ENCODE measurements at regions of chr13 and their contacts with region 1.

Region 1: DNA sequence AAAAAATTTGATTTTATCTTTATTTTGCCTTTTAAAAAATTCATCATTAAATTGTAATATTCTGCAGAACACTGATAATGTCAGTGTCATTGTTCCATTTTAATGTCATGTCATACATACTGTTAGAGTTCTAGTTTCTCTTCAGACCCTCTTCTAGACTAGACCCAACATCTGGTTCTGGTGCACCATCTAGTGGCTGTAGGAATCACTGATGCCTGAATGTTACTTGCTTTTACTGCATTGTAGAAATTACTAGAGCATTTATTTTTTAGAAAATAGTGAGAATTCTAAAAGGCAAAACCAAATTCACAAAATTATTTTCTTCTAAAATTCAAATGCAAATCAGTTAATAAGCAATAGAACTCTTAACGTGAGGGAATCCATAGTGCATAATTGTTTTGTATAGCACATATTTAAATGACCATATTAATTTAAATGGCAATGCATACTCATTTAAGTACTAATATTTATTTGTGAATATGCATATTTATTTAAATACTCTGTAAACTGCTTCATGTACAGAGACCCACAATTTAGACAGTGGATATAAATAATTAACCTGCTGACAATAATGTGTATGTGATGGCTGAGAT is 425.7 kb downstream of the KLF12 start:
- DNase-seq: peak; percentile 66
- ATAC-seq: peak; percentile 82
- H3K4me3 Mint-ChIP-seq: no peak overlapping the region
- H3K27ac Mint-ChIP-seq: no peak overlapping the region
- H3K4me1 Mint-ChIP-seq: peaks cover 10% of the 10 kb centered on the region
- H3K27me3 Mint-ChIP-seq: no peaks in the 10 kb centered on the region
- CTCF ChIP-seq: peak; percentile 84

Region 2: GRCh38 chr13:73058736-73059459 is 649.6 kb before region 1 on chr13 and contains the start of gene KLF5:
- CTCF ChIA-PET with region 1: interaction called, 10 read pairs
- POLR2A ChIA-PET with region 1: no interaction called
- intact Hi-C with region 1: no loop called
- DNase-seq: peak; percentile 96
- ATAC-seq: peak; percentile 99
- H3K4me3 Mint-ChIP-seq: peak within 1 kb of the TSS; percentile 72
- H3K27ac Mint-ChIP-seq: no peak within 1 kb of the TSS
- H3K4me1 Mint-ChIP-seq: peaks cover 15% of the 10 kb centered on the region
- H3K27me3 Mint-ChIP-seq: peaks cover 39% of the 10 kb centered on the region
- CTCF ChIP-seq: no peak
- total RNA-seq, gene KLF5: 1.3 to 1.6 TPM

Region 3: GRCh38 chr13:73228546-73228945 is 479.9 kb before region 1 on chr13:
- CTCF ChIA-PET with region 1: no interaction called
- POLR2A ChIA-PET with region 1: no interaction called
- intact Hi-C with region 1: loop called (anchors 5 kb)
- DNase-seq: peak; percentile 42
- ATAC-seq: peak; percentile 74
- H3K4me3 Mint-ChIP-seq: no peak overlapping the region
- H3K27ac Mint-ChIP-seq: peak overlapping the region; percentile 3
- H3K4me1 Mint-ChIP-seq: peaks cover 40% of the 10 kb centered on the region
- H3K27me3 Mint-ChIP-seq: no peaks in the 10 kb centered on the region
- CTCF ChIP-seq: no peak

Region 4: GRCh38 chr13:73722120-73722519 is 13.6 kb after region 1 on chr13:
- CTCF ChIA-PET with region 1: no interaction called
- POLR2A ChIA-PET with region 1: no interaction called
- intact Hi-C with region 1: no loop called
- DNase-seq: peak; percentile 31
- ATAC-seq: peak; percentile 91
- H3K4me3 Mint-ChIP-seq: no peak overlapping the region
- H3K27ac Mint-ChIP-seq: no peak overlapping the region
- H3K4me1 Mint-ChIP-seq: peaks cover 24% of the 10 kb centered on the region
- H3K27me3 Mint-ChIP-seq: no peaks in the 10 kb centered on the region
- CTCF ChIP-seq: no peak